ENCODE measurements at regions of chr9 and their contacts with region 1.

Region 1: DNA sequence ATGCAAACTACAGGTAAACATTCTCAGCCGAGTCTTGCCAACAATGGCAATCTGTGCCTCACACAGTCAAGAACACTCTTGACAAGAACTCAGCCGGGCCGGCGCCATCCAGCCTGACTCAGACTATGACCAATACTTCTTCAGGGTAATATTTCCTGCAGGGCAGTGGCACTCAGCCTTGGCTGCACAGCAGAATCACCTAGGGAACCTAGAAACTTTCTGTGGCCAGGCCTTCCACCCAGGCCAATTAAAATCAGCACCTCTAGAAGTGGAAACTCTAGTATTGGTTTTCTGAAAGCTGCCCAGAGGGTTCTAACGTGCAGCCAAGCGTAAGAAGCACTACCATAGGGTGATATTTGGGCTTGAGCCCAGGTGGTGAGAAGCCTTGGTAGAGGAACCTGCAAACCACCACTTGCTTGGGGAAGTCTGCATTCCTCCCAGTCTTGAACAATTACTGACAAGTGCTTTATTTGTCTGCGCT is 120.6 kb downstream of the TTLL11 start:
- DNase-seq: no peak
- ATAC-seq: peak in 1 of 8 donors; percentile 39
- H3K4me3 ChIP-seq: no peak overlapping the region
- H3K27ac ChIP-seq: no peak overlapping the region
- H3K4me1 ChIP-seq: peaks cover 0 to 3% (median 0%) of the 10 kb centered on the region in 9 donors
- H3K27me3 ChIP-seq: no peaks in the 10 kb centered on the region
- CTCF ChIP-seq: no peak

Region 2: DNA sequence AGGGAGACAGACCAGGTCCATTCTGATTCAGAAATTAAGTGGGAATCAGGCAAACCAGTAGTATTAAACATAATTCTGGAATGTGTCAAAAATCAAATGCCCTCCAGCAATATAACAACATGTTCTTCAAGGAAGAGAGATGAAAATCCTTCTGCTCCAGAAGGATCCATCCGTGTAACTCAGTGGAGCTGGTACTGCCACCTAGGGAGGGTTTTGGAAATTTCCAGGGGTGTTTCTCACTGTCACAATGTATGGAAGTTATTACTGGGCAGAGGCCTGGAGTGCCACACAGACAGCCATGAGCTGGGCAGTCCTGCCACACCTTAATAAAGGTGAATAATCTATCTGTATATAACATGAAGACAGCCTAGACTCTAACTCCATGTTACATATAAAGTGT is 33.1 kb after region 1 on chr9:
- intact Hi-C with region 1: loop called in 1 of 10 experiments (anchors 1 kb)
- DNase-seq: no peak
- ATAC-seq: no peak
- H3K4me3 ChIP-seq: no peak overlapping the region
- H3K27ac ChIP-seq: no peak overlapping the region
- H3K4me1 ChIP-seq: peaks cover 0 to 37% (median 15%) of the 10 kb centered on the region in 9 donors
- H3K27me3 ChIP-seq: no peaks in the 10 kb centered on the region
- CTCF ChIP-seq: peak in 7 of 9 donors; percentile 17 to 47 (median 34)